Mammary epithelial cell (primary cell): ENCODE measurements at regions of chr1 and their contacts with region 1.

Region 1: GRCh38 chr1:84847253-84848250 is 45.5 kb downstream of the LPAR3 start:
- DNase-seq: peak; percentile 98
- H3K4me3 ChIP-seq: no peak overlapping the region
- H3K27ac ChIP-seq: peak overlapping the region; percentile 93
- H3K4me1 ChIP-seq: peaks cover 58% of the 10 kb centered on the region
- H3K27me3 ChIP-seq: no peaks in the 10 kb centered on the region
- CTCF ChIP-seq: no peak

Region 2: DNA sequence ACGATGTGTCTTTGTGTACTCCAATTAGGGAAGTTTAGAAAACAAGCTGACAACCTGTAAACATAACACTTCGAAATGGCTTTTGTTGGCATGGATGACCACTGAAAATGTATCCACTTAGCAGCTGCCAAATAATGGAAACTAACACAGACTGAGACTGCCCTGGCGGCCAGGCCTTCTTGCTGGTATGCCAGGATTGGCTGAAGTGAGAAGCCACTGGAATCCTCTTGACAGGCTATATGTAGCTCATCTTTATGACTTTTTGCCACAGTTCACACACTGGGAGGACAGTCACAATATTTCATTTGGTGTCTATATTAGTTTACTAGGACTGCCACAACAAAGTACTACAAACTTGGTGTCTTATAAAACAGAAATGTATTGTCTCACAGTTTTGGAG is 260.5 kb before region 1 on chr1:
- CTCF ChIA-PET with region 1: no interaction called
- dilution Hi-C with region 1: no loop called
- in situ Hi-C with region 1: no loop called
- intact Hi-C with region 1: no loop called
- DNase-seq: no peak
- H3K4me3 ChIP-seq: no peak overlapping the region
- H3K27ac ChIP-seq: no peak overlapping the region
- H3K4me1 ChIP-seq: peaks cover 8% of the 10 kb centered on the region
- H3K27me3 ChIP-seq: no peaks in the 10 kb centered on the region
- CTCF ChIP-seq: no peak

Region 3: GRCh38 chr1:84690397-84691121 is 157.0 kb before region 1 on chr1 and contains the start of gene SSX2IP:
- CTCF ChIA-PET with region 1: no interaction called
- dilution Hi-C with region 1: no loop called
- in situ Hi-C with region 1: no loop called
- intact Hi-C with region 1: loop called (anchors 10 kb)
- DNase-seq: peak; percentile 96
- H3K4me3 ChIP-seq: peak within 1 kb of the TSS; percentile 75 to 83 (median 79)
- H3K27ac ChIP-seq: peak within 1 kb of the TSS; percentile 46
- H3K4me1 ChIP-seq: peaks cover 17% of the 10 kb centered on the region
- H3K27me3 ChIP-seq: no peaks in the 10 kb centered on the region
- CTCF ChIP-seq: no peak
- total RNA-seq, gene SSX2IP: 11.3 to 22.5 TPM

Region 4: DNA sequence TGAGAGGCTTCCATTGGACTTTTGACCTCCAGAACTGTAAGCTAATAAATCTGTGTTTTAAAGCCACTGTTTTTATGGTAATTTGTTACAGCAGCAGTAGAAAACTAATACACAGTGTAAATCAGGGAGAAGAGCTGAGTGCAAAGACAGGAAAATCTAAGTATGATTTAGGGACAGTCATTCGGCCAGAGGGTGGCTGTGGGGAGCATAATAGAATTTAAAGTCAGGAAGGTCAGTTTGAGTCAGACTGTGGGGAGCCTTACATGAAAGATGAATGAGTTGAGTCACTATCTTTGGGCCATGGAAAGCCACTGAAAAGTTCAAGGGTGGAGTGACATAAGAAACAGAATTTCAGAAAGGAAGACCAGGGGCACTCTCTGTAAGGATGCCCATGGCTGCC is 104.9 kb before region 1 on chr1:
- CTCF ChIA-PET with region 1: no interaction called
- dilution Hi-C with region 1: no loop called
- in situ Hi-C with region 1: no loop called
- intact Hi-C with region 1: no loop called
- DNase-seq: peak; percentile 33
- H3K4me3 ChIP-seq: no peak overlapping the region
- H3K27ac ChIP-seq: no peak overlapping the region
- H3K4me1 ChIP-seq: no peaks in the 10 kb centered on the region
- H3K27me3 ChIP-seq: no peaks in the 10 kb centered on the region
- CTCF ChIP-seq: no peak

Region 5: GRCh38 chr1:84887261-84887934 is 39.8 kb after region 1 on chr1:
- CTCF ChIA-PET with region 1: no interaction called
- dilution Hi-C with region 1: loop called (anchors 5 kb)
- in situ Hi-C with region 1: no loop called
- intact Hi-C with region 1: loop called (anchors 2 kb)
- DNase-seq: peak; percentile 94
- H3K4me3 ChIP-seq: peak overlapping the region in 1 of 3 experiments; percentile 3
- H3K27ac ChIP-seq: peak overlapping the region; percentile 92
- H3K4me1 ChIP-seq: peaks cover 45% of the 10 kb centered on the region
- H3K27me3 ChIP-seq: no peaks in the 10 kb centered on the region
- CTCF ChIP-seq: no peak